H1 (cell line): ENCODE measurements at regions of chr1 and their contacts with region 1.

Region 1: DNA sequence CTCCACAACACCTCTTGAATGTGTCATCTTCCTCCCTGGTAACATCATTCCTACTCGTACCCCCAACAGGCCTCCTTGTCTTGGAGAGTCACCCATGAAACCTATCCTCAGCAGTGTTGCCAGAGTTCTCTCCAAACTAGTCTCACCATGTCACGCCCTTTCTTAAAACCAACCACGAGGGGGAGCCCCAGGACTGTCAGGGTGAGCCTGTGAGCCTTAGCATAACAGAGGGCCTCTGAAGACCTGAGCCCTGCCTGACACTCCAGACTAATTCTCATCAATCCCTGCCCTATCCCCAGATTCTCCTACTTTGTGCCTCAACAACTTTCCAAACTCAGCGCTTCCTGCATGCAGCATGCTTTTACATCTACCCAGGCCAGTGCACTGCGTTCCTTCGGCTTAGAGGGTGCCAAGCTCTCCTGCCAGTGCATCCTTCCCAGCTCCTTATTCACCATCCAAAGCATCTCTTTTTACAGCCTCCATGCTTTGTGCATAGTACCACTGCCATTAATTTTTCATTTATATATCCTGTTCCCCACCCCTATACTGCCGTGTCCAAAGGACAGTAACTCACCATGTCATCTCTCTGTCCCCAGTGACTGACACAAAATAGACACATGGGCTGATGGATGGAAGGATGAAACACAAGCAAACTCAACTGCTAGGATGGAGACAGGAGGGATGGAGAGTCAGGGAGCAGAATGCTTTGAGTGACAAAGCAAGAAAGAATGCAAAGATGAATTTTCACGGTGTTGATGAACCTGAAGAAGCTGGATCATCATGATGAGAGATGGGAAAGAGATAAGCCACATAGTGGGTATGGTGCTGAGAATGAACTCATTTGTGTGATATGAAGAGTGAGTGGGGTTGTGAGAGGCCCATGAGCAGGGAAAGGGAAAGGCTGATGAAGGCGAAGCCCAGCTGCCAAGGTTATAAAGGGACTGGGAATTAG is 34.0 kb downstream of the ZNF697 start:
- DNase-seq: peak; percentile 69 to 96
- H3K4me3 ChIP-seq: no peak overlapping the region
- H3K27ac ChIP-seq: no peak overlapping the region
- H3K4me1 ChIP-seq: peaks cover 0 to 3% (median under 1%) of the 10 kb centered on the region in 4 experiments; a peak in 5 of 7 replicates
- H3K27me3 ChIP-seq: no peaks in the 10 kb centered on the region
- CTCF ChIP-seq: peak; percentile 62 to 94 (median 80)
- EP300 ChIP-seq: no peak
- POLR2A ChIP-seq: no peak
- RAD21 ChIP-seq: peak; percentile 92 to 97

Region 2: DNA sequence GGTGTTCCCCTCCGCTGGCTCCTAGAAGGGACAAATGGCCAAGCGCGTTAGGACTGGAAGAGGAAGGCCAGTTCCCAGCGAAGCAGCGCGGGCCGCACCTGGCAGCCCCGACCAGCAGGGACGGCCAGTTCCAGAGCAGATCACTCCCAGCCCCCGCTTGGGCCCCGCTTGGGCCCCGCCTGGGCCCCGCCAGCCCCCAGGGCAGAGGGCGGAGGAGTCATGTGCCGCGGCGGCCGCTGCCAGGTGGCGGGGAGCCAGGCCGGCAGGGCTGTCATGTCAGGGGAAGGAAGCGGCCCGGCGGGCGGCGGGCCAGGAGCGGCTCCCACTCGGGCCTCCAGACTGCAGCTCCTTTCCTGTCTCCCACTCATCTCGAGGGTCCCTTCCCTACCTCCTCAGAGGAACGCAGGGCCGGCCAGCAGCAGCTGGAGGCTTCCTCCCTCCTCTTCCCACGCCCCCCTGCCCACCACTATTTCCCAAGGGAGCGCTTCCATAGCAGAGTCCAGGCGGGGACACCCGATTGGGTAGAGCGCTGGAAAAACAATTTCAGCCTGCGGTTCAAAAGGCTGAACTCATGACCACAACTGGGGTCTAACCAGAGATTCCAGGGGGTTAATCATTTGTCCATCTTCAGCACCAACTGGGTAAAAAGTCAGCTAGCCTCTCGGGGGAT is 17.5 kb after region 1 on chr1:
- CTCF ChIA-PET with region 1: interaction called, 47 read pairs
- POLR2A ChIA-PET with region 1: interaction called, 7 read pairs
- DNase-seq: peak in 1 of 2 experiments; percentile 67
- H3K4me3 ChIP-seq: peak overlapping the region in 1 of 4 experiments; percentile 34; a peak in 2 of 8 replicates
- H3K27ac ChIP-seq: no peak overlapping the region
- H3K4me1 ChIP-seq: peaks cover 0 to 6% (median 3%) of the 10 kb centered on the region in 4 experiments; a peak in 4 of 7 replicates
- H3K27me3 ChIP-seq: no peaks in the 10 kb centered on the region
- CTCF ChIP-seq: no peak
- EP300 ChIP-seq: no peak
- POLR2A ChIP-seq: no peak
- RAD21 ChIP-seq: no peak

Region 3: DNA sequence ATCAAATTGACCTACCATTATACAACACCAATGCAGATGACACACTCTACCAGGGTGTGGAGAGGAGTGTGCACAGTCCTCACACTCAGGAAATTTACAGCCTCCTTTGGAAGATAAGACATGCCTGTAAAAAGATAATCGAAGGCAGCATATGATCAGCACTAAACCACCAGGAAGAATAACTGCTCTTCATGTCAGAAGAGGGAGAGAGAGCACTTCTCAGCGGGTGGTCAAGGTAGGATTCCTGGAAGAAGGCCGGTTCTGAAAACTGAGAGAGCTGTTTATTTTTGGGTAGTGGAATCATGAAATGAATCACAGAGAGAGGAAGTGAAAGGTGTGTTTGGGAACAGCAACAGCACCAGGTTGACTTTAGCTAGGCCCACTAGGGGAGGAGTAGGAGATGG is 48.0 kb after region 1 on chr1:
- CTCF ChIA-PET with region 1: interaction called, 786 read pairs
- POLR2A ChIA-PET with region 1: interaction called, 40 read pairs
- DNase-seq: no peak
- H3K4me3 ChIP-seq: no peak overlapping the region
- H3K27ac ChIP-seq: no peak overlapping the region
- H3K4me1 ChIP-seq: peaks cover 0 to 5% (median 1%) of the 10 kb centered on the region in 4 experiments; a peak in 2 of 7 replicates
- H3K27me3 ChIP-seq: no peaks in the 10 kb centered on the region
- CTCF ChIP-seq: no peak
- EP300 ChIP-seq: no peak
- POLR2A ChIP-seq: no peak
- RAD21 ChIP-seq: no peak